Cardiac septum (tissue), 1 donor: ENCODE measurements at regions of chr17 and their contacts with region 1.

Region 1: DNA sequence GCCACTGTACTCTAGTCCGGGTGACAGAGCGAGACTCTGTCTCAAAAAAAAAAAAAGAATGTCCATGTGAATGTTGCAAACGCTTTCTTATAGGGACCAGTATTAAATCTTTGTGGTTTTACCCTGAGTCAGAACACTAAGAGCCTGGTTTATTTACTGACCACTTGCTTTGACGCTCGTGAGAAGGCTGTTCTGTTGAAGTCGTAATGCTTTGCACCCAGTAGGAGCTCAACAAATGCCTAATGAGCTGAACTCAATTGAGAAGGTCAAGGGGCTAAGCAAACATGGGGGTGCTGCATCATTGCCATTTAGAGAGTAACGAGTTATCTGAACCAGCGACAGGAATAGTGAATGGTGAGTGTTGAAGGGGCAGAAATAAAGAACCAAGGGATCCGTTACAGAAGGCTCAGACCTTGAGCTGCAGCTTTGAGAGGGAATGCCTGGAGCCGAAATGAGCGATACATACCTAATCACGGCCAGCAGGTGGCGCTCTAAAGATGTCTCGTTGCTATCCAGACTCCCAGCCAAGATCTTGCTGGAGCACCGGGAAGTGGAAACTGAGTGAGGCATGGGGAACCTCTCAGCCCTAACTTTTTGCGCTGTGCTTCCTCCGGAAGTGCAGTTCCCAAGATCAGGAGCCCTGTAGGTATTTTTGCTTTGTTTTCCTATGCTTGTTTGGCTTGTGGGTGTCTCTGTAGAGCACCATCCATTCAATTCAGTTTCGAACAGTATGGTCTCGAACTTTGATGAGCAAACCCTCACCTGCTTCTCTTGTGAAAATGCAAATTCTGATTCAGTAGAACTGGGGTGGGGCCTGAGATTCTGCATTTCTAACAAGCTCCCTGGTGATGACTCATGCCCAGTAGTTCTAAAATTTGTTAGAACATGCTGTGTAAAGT is 12.6 kb upstream of the RNF222 start:
- DNase-seq: peak; percentile 94

Region 2: GRCh38 chr17:8482546-8482945 is 72.3 kb after region 1 on chr17:
- intact Hi-C with region 1: loop called (anchors 2 kb)
- DNase-seq: no peak